Common myeloid progenitor, CD34-positive (primary cell): ENCODE measurements at regions of chr9 and their contacts with region 1.

Region 1: GRCh38 chr9:214648-215493 is at the start of gene DOCK8:
- DNase-seq: peak; percentile 85 to 94 (median 93)
- H3K4me3 ChIP-seq: peak within 1 kb of the TSS; percentile 81 to 91 (median 87)
- H3K27ac ChIP-seq: peak within 1 kb of the TSS in 1 of 2 experiments; percentile 79
- H3K4me1 ChIP-seq: peaks cover 10 to 36% (median 16%) of the 10 kb centered on the region in 4 experiments
- H3K27me3 ChIP-seq: no peaks in the 10 kb centered on the region

Region 2: GRCh38 chr9:272251-273213 is 57.7 kb after region 1 on chr9:
- CTCF ChIA-PET with region 1: interaction called, 13 read pairs
- POLR2A ChIA-PET with region 1: interaction called, 5 read pairs
- DNase-seq: peak; percentile 91 to 98 (median 96)
- H3K4me3 ChIP-seq: peak overlapping the region in 6 of 7 experiments; percentile 58 to 86 (median 74)
- H3K27ac ChIP-seq: peak overlapping the region; percentile 81 to 94
- H3K4me1 ChIP-seq: peaks cover 25 to 55% (median 44%) of the 10 kb centered on the region in 4 experiments
- H3K27me3 ChIP-seq: no peaks in the 10 kb centered on the region

Region 3: DNA sequence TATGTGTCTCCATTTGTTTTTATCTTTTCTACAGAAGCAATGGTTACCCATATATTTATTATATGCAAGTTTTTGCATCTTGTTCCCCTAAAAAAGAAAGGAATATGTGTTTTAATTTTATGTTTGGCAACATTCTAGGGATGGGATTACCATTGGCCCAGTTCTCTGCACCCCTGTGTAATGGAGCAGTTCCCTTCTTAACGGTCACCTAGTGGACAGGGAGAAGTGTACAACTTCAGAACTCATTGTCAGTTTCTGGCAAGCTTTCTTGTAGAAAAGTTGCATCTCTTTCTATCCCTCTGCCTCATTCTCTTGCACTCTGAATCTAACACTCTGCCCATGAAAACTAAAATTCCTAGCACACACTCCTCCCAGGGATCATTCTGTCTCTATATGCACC is 78.0 kb after region 1 on chr9:
- CTCF ChIA-PET with region 1: interaction called, 13 read pairs
- POLR2A ChIA-PET with region 1: interaction called, 3 read pairs
- DNase-seq: no peak
- H3K4me3 ChIP-seq: no peak overlapping the region
- H3K27ac ChIP-seq: no peak overlapping the region
- H3K4me1 ChIP-seq: peaks cover 12 to 23% (median 15%) of the 10 kb centered on the region in 4 experiments
- H3K27me3 ChIP-seq: no peaks in the 10 kb centered on the region

Region 4: DNA sequence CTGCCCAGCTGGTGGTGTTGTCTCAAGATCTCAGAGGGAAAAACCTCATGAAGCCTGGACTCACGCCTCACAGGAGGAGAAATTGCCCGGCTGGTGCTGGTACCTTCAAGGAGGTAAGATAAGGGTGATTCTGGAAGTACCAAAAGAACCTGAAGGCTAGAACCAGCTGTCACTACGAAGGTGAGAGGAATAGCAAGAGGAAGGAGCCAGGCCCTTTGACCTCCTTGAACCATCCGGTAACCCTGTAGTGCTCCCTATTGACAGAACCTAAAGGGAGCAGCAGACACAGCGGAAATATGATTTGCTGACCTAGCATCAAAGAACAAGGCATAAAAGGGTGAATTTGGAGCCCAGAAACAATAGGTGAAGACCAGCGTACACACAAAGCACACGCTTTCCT is 92.0 kb after region 1 on chr9:
- CTCF ChIA-PET with region 1: interaction called, 12 read pairs
- POLR2A ChIA-PET with region 1: interaction called, 7 read pairs
- DNase-seq: peak; percentile 54 to 71 (median 68)
- H3K4me3 ChIP-seq: no peak overlapping the region
- H3K27ac ChIP-seq: no peak overlapping the region
- H3K4me1 ChIP-seq: no peaks in the 10 kb centered on the region
- H3K27me3 ChIP-seq: no peaks in the 10 kb centered on the region

Region 5: GRCh38 chr9:316382-316965 is 101.6 kb after region 1 on chr9:
- CTCF ChIA-PET with region 1: interaction called, 11 read pairs
- POLR2A ChIA-PET with region 1: no interaction called
- DNase-seq: peak; percentile 15 to 55 (median 28)
- H3K4me3 ChIP-seq: peak overlapping the region in 1 of 7 experiments; percentile 6
- H3K27ac ChIP-seq: no peak overlapping the region
- H3K4me1 ChIP-seq: peaks cover 0 to 1% (median 0%) of the 10 kb centered on the region in 4 experiments
- H3K27me3 ChIP-seq: no peaks in the 10 kb centered on the region